ENCODE measurements at regions of chr22 and their contacts with region 1.

Region 1: GRCh38 chr22:37121887-37122591 is 12.5 kb upstream of the TMPRSS6 start:
- DNase-seq: peak; percentile 96
- H3K4me3 Mint-ChIP-seq: peak overlapping the region; percentile 63
- H3K27ac Mint-ChIP-seq: peak overlapping the region; percentile 98
- H3K4me1 Mint-ChIP-seq: peaks cover 88% of the 10 kb centered on the region
- H3K27me3 Mint-ChIP-seq: no peaks in the 10 kb centered on the region

Region 2: DNA sequence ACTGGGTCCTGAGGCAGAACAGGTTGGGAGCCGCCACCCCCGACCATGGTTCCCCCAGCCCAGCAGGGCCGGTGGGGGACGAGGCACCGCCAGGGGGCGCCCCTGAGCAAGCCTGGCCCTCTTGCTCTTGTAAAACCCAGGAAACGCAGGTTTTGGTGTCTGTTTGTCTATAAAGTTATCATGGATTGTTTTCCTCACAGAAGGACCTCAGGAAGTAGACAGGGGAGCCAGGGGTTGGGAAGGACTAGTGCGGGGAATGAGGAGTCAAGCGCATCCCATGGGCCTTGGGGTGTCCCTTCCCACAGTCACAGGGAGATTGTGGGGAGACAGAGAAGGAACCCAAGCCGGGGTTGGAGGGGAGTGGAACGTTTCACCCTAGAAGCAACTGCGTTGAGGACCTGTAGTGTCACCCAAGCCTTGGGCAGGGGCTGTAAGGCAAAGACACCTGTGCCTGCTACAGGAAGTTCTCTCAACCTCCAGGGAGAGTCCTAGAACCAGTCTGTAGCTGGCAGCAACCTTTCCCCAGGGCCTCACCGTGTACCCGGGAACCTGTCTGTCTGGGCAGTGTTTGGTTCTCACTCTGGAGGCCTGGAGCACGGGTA is 44.1 kb before region 1 on chr22:
- CTCF ChIA-PET with region 1: interaction called, 38 read pairs
- DNase-seq: peak; percentile 89
- H3K4me3 Mint-ChIP-seq: peak overlapping the region; percentile 1
- H3K27ac Mint-ChIP-seq: peak overlapping the region; percentile 95
- H3K4me1 Mint-ChIP-seq: peaks cover 64% of the 10 kb centered on the region
- H3K27me3 Mint-ChIP-seq: peaks cover 34% of the 10 kb centered on the region